ENCODE measurements at regions of chr19 and their contacts with region 1.

Region 1: GRCh38 chr19:36489118-36489919 is at the start of gene ZNF566:
- DNase-seq: peak; percentile 81 to 96
- H3K4me3 ChIP-seq: peak within 1 kb of the TSS; percentile 71 to 72
- H3K27ac ChIP-seq: peak within 1 kb of the TSS; percentile 92 to 94
- H3K4me1 ChIP-seq: peaks cover 0 to 5% of the 10 kb centered on the region in 2 donors
- H3K27me3 ChIP-seq: no peaks in the 10 kb centered on the region
- CTCF ChIP-seq: peak in 1 of 3 experiments; percentile 13
- total RNA-seq, gene ZNF566: 9.9 TPM

Region 2: DNA sequence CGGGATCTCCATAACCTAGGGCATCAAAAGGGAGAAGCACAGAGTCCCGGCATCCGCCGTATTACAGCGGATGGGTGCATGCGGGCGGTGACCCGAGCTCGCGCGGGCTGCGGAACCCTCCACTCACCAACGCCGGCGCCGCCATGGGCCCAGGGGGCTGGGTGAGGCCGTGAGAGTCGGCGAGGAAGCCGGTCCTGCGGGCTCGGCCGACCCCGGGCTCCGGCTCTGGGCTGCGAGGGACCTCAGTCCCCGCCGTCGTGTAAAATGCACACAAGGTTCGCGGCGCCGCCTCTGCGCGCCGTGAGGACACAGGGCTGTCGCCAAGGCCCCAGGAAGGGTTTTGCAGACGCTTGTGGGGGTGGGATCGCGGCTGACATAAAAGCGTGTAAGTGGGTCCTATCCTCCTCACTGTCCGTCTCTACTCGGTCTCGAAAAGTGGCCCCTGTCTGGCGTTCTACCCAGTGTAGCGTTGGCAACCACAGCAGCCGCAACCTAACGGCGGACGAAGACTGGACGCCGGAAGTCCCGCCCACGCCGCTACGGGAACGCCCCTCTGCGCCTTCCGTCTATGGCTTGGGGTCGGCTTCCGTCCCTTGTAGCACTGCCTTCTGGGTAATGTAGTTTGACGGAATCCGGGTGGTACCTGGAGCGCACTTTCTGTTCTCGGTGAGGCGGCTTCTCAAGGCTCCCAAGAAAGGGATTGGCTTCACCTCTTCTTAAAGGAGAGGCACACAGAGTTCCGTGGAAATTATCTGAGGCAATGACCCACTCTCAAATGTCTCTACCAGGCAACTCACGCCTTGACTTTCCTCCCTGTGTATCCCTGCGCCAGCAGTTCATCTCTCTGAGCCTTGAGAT is 1716.4 kb before region 1 on chr19 and contains the start of gene ZNF599:
- intact Hi-C with region 1: loop called (anchors 5 kb)
- DNase-seq: peak; percentile 57 to 94
- H3K4me3 ChIP-seq: peak within 1 kb of the TSS; percentile 80 to 89
- H3K27ac ChIP-seq: peak within 1 kb of the TSS; percentile 75 to 80
- H3K4me1 ChIP-seq: peaks cover 0 to 3% of the 10 kb centered on the region in 2 donors
- H3K27me3 ChIP-seq: no peaks in the 10 kb centered on the region
- CTCF ChIP-seq: no peak
- total RNA-seq, gene ZNF599: 2.2 TPM

Region 3: DNA sequence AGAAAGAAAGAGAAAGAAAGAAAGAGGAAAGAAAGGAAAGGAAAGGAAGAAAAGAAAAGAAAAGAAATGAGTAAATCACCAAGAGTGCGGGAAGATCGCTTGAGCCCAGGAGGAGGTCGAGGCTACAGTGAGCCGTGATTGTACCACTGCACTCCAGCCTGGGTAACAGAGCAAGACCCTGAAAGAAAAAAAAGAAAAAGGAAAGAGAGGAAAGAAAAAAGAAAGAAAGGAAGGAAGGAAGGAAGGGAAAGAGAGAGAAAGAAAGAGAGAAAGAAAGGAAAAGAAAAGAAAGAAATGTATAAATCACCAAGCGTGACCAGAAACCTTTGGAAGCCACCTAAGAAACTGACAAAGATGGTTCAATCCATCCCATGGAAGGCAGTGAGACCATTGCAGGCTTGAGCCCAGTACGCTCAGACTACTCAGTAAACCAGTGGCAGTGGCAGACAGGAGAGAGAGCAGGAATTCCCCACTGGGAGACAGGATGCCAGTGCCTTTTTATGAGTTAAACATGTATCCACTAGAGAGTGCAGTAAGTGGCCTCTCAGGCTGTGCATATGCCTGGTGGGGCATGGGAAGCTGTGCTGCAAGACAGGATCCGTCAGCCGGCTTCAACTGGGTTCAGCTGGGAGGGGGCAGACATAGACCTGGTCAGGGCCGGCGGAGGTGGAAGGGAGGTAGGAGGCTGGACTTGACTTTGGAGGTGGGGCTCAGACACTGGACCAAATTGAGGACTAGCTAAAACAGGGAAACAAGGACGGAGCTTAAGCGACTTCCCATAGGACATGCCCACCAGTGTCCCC is 1113.6 kb before region 1 on chr19:
- intact Hi-C with region 1: no loop called
- DNase-seq: no peak
- H3K4me3 ChIP-seq: no peak overlapping the region
- H3K27ac ChIP-seq: no peak overlapping the region
- H3K4me1 ChIP-seq: no peaks in the 10 kb centered on the region
- H3K27me3 ChIP-seq: no peaks in the 10 kb centered on the region
- CTCF ChIP-seq: no peak

Region 4: DNA sequence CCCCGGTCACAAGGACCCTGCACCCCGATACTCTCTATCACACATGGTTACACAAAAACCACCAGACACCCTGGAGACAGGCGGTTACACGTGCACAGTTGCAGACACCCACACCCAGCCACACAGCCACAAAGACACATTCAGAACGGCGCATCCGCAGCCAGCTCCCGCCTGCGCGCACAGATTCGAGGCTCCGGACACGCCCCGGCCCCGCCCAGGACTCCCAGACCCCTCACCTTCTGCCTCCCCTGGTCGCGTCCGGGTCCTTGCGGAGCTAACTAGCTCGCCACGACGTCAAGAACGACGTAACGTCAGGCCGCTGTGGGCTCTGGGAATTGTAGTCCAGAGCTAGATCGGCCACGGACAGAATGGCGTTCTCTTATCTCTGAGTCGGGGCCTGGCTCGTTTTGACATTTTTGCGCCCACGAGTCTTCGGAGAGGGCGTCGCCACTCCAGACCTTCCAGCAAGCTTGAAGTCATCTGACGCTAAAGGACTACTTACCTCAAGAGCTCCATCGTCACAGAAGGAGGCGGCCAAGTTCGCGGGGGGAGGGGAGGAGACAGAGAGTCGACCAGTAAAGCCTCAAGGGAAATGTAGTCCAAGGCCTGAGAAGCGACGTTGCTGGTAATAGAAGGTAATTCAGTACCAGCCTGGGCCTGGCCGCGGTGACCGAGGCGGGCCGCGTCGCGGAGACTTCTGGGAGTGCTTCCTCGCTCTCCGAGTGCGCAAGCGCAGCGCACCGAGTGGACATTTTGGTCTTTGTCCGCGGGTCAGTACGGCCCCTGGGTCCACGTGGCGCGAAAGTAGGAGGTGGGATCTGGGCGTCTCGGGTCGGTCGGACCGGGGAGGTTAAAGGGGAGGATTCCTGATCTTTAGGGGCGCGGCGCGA is 274.7 kb before region 1 on chr19 and contains the starts of genes ZNF146 and ZNF565:
- intact Hi-C with region 1: loop called (anchors 10 kb)
- DNase-seq: peak; percentile 96 to 99
- H3K4me3 ChIP-seq: peak within 1 kb of the TSS; percentile 81
- H3K27ac ChIP-seq: peak within 1 kb of the TSS; percentile 92 to 96
- H3K4me1 ChIP-seq: peaks cover 0 to 12% of the 10 kb centered on the region in 2 donors
- H3K27me3 ChIP-seq: no peaks in the 10 kb centered on the region
- CTCF ChIP-seq: no peak
- total RNA-seq, gene ZNF146: 21.2 TPM
- total RNA-seq, gene ZNF565: 1.9 TPM

Region 5: GRCh38 chr19:36378625-36379509 is 110.5 kb before region 1 on chr19 and contains the start of gene ZFP14:
- intact Hi-C with region 1: loop called (anchors 5 kb)
- DNase-seq: peak; percentile 77 to 95
- H3K4me3 ChIP-seq: peak within 1 kb of the TSS; percentile 66 to 92
- H3K27ac ChIP-seq: peak within 1 kb of the TSS; percentile 67 to 89
- H3K4me1 ChIP-seq: peaks cover 3 to 8% of the 10 kb centered on the region in 2 donors
- H3K27me3 ChIP-seq: no peaks in the 10 kb centered on the region
- CTCF ChIP-seq: no peak
- total RNA-seq, gene ZFP14: 1.2 TPM

Region 6: GRCh38 chr19:36418287-36419001 is 70.9 kb before region 1 on chr19 and contains the start of gene ZFP82:
- intact Hi-C with region 1: loop called (anchors 1 kb)
- DNase-seq: peak; percentile 12 to 78
- H3K4me3 ChIP-seq: peak within 1 kb of the TSS; percentile 61 to 77
- H3K27ac ChIP-seq: peak within 1 kb of the TSS; percentile 76 to 84
- H3K4me1 ChIP-seq: peaks cover 0 to 7% of the 10 kb centered on the region in 2 donors
- H3K27me3 ChIP-seq: no peaks in the 10 kb centered on the region
- CTCF ChIP-seq: no peak
- total RNA-seq, gene ZFP82: 1.3 TPM

Region 7: GRCh38 chr19:36449059-36449670 is 40.2 kb before region 1 on chr19:
- intact Hi-C with region 1: no loop called
- DNase-seq: no peak
- H3K4me3 ChIP-seq: peak overlapping the region in 1 of 2 donors; percentile 7
- H3K27ac ChIP-seq: no peak overlapping the region
- H3K4me1 ChIP-seq: no peaks in the 10 kb centered on the region
- H3K27me3 ChIP-seq: no peaks in the 10 kb centered on the region
- CTCF ChIP-seq: no peak

Region 8: DNA sequence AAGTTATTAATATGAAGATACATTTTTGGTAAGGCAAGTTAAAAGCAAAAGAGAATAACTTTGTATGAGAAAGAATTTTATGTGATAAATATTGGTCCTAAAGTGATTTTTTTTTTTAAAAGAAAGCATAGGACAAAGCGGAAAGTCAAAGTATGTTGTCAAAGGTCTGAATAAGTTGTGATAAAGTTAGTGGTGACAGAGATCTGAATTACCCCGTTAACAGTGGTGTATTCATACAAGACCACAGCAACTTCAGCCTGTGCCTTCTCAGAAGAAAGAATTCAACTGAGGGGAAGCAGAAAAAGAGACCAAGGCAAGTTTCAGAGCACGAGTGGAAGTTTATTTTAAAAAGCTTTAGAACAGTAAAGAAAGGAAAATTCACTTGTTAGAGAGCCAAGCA is 19.0 kb after region 1 on chr19:
- intact Hi-C with region 1: no loop called
- DNase-seq: no peak
- H3K4me3 ChIP-seq: no peak overlapping the region
- H3K27ac ChIP-seq: no peak overlapping the region
- H3K4me1 ChIP-seq: no peaks in the 10 kb centered on the region
- H3K27me3 ChIP-seq: no peaks in the 10 kb centered on the region
- CTCF ChIP-seq: no peak

Region 9: GRCh38 chr19:36573020-36573885 is 83.9 kb after region 1 on chr19 and contains the start of gene ZNF529:
- intact Hi-C with region 1: loop called (anchors 2 kb)
- DNase-seq: peak; percentile 66 to 95
- H3K4me3 ChIP-seq: peak within 1 kb of the TSS; percentile 79 to 82
- H3K27ac ChIP-seq: peak within 1 kb of the TSS; percentile 83 to 88
- H3K4me1 ChIP-seq: peaks cover 3 to 9% of the 10 kb centered on the region in 2 donors
- H3K27me3 ChIP-seq: no peaks in the 10 kb centered on the region
- CTCF ChIP-seq: no peak
- total RNA-seq, gene ZNF529: 3.8 TPM

Region 10: GRCh38 chr19:36687214-36688056 is 198.1 kb after region 1 on chr19 and contains the start of gene ZNF567:
- intact Hi-C with region 1: loop called (anchors 1 kb)
- DNase-seq: peak; percentile 88 to 98
- H3K4me3 ChIP-seq: peak within 1 kb of the TSS; percentile 68 to 75
- H3K27ac ChIP-seq: peak within 1 kb of the TSS; percentile 39 to 66
- H3K4me1 ChIP-seq: peaks cover 0 to 6% of the 10 kb centered on the region in 2 donors
- H3K27me3 ChIP-seq: no peaks in the 10 kb centered on the region
- CTCF ChIP-seq: no peak
- total RNA-seq, gene ZNF567: 3.7 TPM